Activated naive CD4-positive, alpha-beta T cell treated with anti-CD3 and anti-CD28 coated beads for 36 hours (primary cell): ENCODE measurements at regions of chr4 and their contacts with region 1.

Region 1: GRCh38 chr4:73258686-73259570 is at the start of gene ANKRD17:
- DNase-seq: peak; percentile 93
- H3K4me3 Mint-ChIP-seq: peak within 1 kb of the TSS; percentile 98
- H3K27ac Mint-ChIP-seq: peak within 1 kb of the TSS; percentile 100
- H3K4me1 Mint-ChIP-seq: peaks cover 50% of the 10 kb centered on the region
- H3K27me3 Mint-ChIP-seq: no peaks in the 10 kb centered on the region
- total RNA-seq, gene ANKRD17: 42.3 to 44.2 TPM

Region 2: GRCh38 chr4:73019462-73020047 is 239.4 kb before region 1 on chr4:
- CTCF ChIA-PET with region 1: no interaction called
- intact Hi-C with region 1: loop called (anchors 1 kb)
- DNase-seq: peak; percentile 19
- H3K4me3 Mint-ChIP-seq: no peak overlapping the region
- H3K27ac Mint-ChIP-seq: no peak overlapping the region
- H3K4me1 Mint-ChIP-seq: peaks cover 1% of the 10 kb centered on the region
- H3K27me3 Mint-ChIP-seq: peaks cover 2% of the 10 kb centered on the region

Region 3: GRCh38 chr4:73086095-73086868 is 172.6 kb before region 1 on chr4:
- CTCF ChIA-PET with region 1: interaction called, 4 read pairs
- intact Hi-C with region 1: loop called (anchors 1 kb)
- DNase-seq: no peak
- H3K4me3 Mint-ChIP-seq: peak overlapping the region; percentile 36
- H3K27ac Mint-ChIP-seq: no peak overlapping the region
- H3K4me1 Mint-ChIP-seq: peaks cover 17% of the 10 kb centered on the region
- H3K27me3 Mint-ChIP-seq: no peaks in the 10 kb centered on the region

Region 4: GRCh38 chr4:73142995-73143547 is 115.9 kb before region 1 on chr4:
- CTCF ChIA-PET with region 1: interaction called, 8 read pairs
- intact Hi-C with region 1: loop called (anchors 2 kb)
- DNase-seq: no peak
- H3K4me3 Mint-ChIP-seq: no peak overlapping the region
- H3K27ac Mint-ChIP-seq: no peak overlapping the region
- H3K4me1 Mint-ChIP-seq: peaks cover 8% of the 10 kb centered on the region
- H3K27me3 Mint-ChIP-seq: no peaks in the 10 kb centered on the region

Region 5: GRCh38 chr4:73187325-73187724 is 71.6 kb before region 1 on chr4:
- CTCF ChIA-PET with region 1: no interaction called
- intact Hi-C with region 1: no loop called
- DNase-seq: no peak
- H3K4me3 Mint-ChIP-seq: no peak overlapping the region
- H3K27ac Mint-ChIP-seq: no peak overlapping the region
- H3K4me1 Mint-ChIP-seq: peaks cover 26% of the 10 kb centered on the region
- H3K27me3 Mint-ChIP-seq: no peaks in the 10 kb centered on the region

Region 6: GRCh38 chr4:73275318-73275654 is 16.4 kb after region 1 on chr4:
- CTCF ChIA-PET with region 1: no interaction called
- intact Hi-C with region 1: no loop called
- DNase-seq: no peak
- H3K4me3 Mint-ChIP-seq: no peak overlapping the region
- H3K27ac Mint-ChIP-seq: no peak overlapping the region
- H3K4me1 Mint-ChIP-seq: peaks cover 10% of the 10 kb centered on the region
- H3K27me3 Mint-ChIP-seq: no peaks in the 10 kb centered on the region

Region 7: GRCh38 chr4:73308286-73308685 is 49.4 kb after region 1 on chr4:
- CTCF ChIA-PET with region 1: interaction called, 3 read pairs
- intact Hi-C with region 1: loop called (anchors 2 kb)
- DNase-seq: no peak
- H3K4me3 Mint-ChIP-seq: no peak overlapping the region
- H3K27ac Mint-ChIP-seq: no peak overlapping the region
- H3K4me1 Mint-ChIP-seq: no peaks in the 10 kb centered on the region
- H3K27me3 Mint-ChIP-seq: no peaks in the 10 kb centered on the region

Region 8: DNA sequence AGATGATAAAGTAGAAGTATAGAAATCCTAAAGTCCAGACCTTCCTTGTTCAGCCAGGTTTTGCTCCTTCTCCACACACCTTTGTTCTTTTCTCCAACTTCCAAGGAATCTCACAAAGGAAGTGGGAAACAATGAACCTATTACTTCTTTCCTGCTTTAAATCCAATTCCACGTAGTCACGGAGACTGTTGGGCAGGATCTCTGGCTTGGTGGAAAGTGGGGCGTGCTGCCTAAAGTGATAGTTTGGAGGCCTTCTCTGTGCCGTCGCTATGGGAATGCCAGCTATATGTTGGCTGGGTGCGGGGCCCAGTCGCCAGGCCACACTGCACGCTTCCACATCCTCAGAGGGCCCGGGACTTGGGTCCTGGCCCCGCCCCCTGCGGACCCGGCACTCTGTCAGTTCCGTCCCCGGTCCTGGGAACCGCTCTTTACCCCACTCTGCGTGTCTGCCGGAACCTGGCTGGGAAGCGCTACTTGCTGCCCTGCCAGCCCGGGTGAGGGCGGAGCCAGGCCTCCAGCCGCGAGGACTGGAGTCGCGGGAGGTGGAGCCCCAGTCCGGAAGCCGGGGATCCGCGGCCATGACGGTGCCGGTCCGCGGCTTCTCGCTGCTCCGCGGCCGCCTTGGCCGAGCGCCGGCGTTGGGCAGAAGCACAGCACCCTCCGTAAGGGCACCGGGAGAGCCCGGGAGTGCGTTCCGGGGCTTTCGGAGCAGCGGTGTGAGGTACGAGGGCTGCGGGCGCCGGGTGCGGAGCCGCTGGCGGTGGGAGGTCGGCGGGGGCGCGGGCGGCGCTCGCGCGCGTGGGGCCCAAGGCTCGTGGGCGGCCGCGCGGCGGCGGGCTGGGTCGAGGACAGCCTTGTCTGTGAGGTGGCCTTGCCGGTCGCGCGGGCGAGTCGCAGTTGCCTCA is 898.9 kb after region 1 on chr4 and contains the start of gene MTHFD2L:
- CTCF ChIA-PET with region 1: no interaction called
- intact Hi-C with region 1: loop called (anchors 2 kb)
- DNase-seq: peak; percentile 83
- H3K4me3 Mint-ChIP-seq: peak within 1 kb of the TSS; percentile 87
- H3K27ac Mint-ChIP-seq: peak within 1 kb of the TSS; percentile 83
- H3K4me1 Mint-ChIP-seq: peaks cover 23% of the 10 kb centered on the region
- H3K27me3 Mint-ChIP-seq: peaks cover 4% of the 10 kb centered on the region
- total RNA-seq, gene MTHFD2L: 4.8 to 5.3 TPM